Heart left ventricle (tissue), 16 donors: ENCODE measurements at regions of chr10 and their contacts with region 1.

Region 1: GRCh38 chr10:30529373-30529998 is 95.5 kb downstream of the MAP3K8 start:
- DNase-seq: peak; percentile 52 to 85 (median 77)
- ATAC-seq: peak; percentile 45 to 91 (median 79)
- H3K4me3 ChIP-seq: peak overlapping the region in 3 of 12 donors; percentile 3 to 37 (median 6)
- H3K27ac ChIP-seq: peak overlapping the region in 5 of 12 donors; percentile 13 to 91 (median 46)
- H3K4me1 ChIP-seq: peaks cover 0 to 87% (median 0%) of the 10 kb centered on the region in 12 donors
- H3K27me3 ChIP-seq: no peaks in the 10 kb centered on the region
- CTCF ChIP-seq: no peak
- POLR2A ChIP-seq: no peak

Region 2: GRCh38 chr10:30467651-30468338 is 61.7 kb before region 1 on chr10:
- intact Hi-C with region 1: loop called in 1 of 10 experiments (anchors 10 kb)
- DNase-seq: no peak
- ATAC-seq: peak in 1 of 4 donors; percentile 56
- H3K4me3 ChIP-seq: peak overlapping the region in 1 of 12 donors; percentile 10
- H3K27ac ChIP-seq: peak overlapping the region in 1 of 12 donors; percentile 86
- H3K4me1 ChIP-seq: peaks cover 0 to 17% (median 0%) of the 10 kb centered on the region in 12 donors
- H3K27me3 ChIP-seq: no peaks in the 10 kb centered on the region
- CTCF ChIP-seq: no peak
- POLR2A ChIP-seq: no peak